GM12878 (cell line): ENCODE measurements at regions of chr9 and their contacts with region 1.

Region 1: GRCh38 chr9:134163353-134164196 is 789 bp downstream of the RNU6ATAC start:
- DNase-seq: no peak
- ATAC-seq: no peak
- H3K4me3 ChIP-seq: peak overlapping the region; percentile 58; the same call in 1 of the 2 replicates
- H3K27ac ChIP-seq: peak overlapping the region; percentile 61
- H3K4me1 ChIP-seq: peaks cover 13% of the 10 kb centered on the region
- H3K27me3 ChIP-seq: no peaks in the 10 kb centered on the region
- CTCF ChIP-seq: peak in 2 of 3 experiments; percentile 32 to 33; a peak in 3 of 6 replicates
- EP300 ChIP-seq: no peak
- POLR2A ChIP-seq: peak; percentile 68
- RAD21 ChIP-seq: no peak

Region 2: DNA sequence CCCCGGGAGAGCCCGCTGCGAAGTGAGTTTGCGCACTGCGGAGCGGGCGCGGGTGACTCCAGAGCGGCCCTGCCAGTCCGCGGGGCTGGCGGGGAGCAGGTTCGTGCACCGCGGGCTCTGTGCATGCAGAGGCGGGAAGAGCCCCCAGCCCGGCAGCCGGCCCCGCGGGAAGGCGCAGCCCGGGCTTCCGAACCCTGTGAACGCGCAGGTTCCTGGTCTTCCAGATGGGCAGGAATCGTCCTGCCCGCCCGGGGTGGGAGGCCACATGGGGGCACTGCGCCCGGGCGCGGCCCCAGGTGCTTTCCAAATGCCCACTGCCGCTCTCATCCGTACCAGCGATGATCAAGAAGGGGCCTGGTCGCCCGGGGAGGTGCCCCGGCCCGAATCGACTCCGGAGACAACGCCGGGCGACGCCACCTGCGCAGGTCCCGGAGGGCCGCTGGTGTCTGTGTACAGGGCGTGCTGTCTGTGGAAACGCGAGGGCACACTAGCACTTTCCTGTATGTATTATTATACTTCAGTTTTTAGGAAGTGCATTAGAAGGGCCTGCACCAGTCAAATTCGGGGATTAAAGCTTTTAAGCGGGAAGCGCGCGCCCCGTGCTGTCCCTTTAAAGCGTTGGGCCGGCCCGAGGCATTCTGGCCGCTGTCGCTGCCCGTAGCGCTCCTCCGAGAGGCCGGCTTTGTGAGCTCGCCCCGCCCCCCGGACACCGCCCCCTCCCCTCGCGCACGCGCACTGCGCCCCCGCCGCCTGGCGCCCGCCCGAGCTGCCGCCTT is 28.0 kb before region 1 on chr9 and contains the start of gene WDR5:
- CTCF ChIA-PET with region 1: interaction called, 5 read pairs
- POLR2A ChIA-PET with region 1: interaction called, 5 read pairs
- RAD21 ChIA-PET with region 1: interaction called, 3 read pairs
- SMC1A ChIA-PET with region 1: interaction called, 5 read pairs
- in situ Hi-C with region 1: no loop called
- intact Hi-C with region 1: loop called (anchors 2 kb)
- DNase-seq: peak; percentile 31
- ATAC-seq: peak; percentile 85
- H3K4me3 ChIP-seq: peak within 1 kb of the TSS; percentile 88
- H3K27ac ChIP-seq: peak within 1 kb of the TSS; percentile 87
- H3K4me1 ChIP-seq: peaks cover 7% of the 10 kb centered on the region
- H3K27me3 ChIP-seq: no peaks in the 10 kb centered on the region
- CTCF ChIP-seq: peak; percentile 7 to 30 (median 28); a peak in 3 of 6 replicates
- EP300 ChIP-seq: no peak
- POLR2A ChIP-seq: peak; percentile 70
- RAD21 ChIP-seq: no peak
- polyA plus RNA-seq, gene WDR5: 1.4 to 3.8 TPM

Region 3: GRCh38 chr9:134289241-134289875 is 125.8 kb after region 1 on chr9:
- CTCF ChIA-PET with region 1: no interaction called
- POLR2A ChIA-PET with region 1: no interaction called
- RAD21 ChIA-PET with region 1: no interaction called
- SMC1A ChIA-PET with region 1: no interaction called
- in situ Hi-C with region 1: no loop called
- intact Hi-C with region 1: no loop called
- DNase-seq: no peak
- ATAC-seq: no peak
- H3K4me3 ChIP-seq: no peak overlapping the region
- H3K27ac ChIP-seq: no peak overlapping the region
- H3K4me1 ChIP-seq: no peaks in the 10 kb centered on the region
- H3K27me3 ChIP-seq: no peaks in the 10 kb centered on the region; a peak in 1 of 4 replicates
- CTCF ChIP-seq: no peak
- EP300 ChIP-seq: no peak
- POLR2A ChIP-seq: no peak
- RAD21 ChIP-seq: no peak

Region 4: DNA sequence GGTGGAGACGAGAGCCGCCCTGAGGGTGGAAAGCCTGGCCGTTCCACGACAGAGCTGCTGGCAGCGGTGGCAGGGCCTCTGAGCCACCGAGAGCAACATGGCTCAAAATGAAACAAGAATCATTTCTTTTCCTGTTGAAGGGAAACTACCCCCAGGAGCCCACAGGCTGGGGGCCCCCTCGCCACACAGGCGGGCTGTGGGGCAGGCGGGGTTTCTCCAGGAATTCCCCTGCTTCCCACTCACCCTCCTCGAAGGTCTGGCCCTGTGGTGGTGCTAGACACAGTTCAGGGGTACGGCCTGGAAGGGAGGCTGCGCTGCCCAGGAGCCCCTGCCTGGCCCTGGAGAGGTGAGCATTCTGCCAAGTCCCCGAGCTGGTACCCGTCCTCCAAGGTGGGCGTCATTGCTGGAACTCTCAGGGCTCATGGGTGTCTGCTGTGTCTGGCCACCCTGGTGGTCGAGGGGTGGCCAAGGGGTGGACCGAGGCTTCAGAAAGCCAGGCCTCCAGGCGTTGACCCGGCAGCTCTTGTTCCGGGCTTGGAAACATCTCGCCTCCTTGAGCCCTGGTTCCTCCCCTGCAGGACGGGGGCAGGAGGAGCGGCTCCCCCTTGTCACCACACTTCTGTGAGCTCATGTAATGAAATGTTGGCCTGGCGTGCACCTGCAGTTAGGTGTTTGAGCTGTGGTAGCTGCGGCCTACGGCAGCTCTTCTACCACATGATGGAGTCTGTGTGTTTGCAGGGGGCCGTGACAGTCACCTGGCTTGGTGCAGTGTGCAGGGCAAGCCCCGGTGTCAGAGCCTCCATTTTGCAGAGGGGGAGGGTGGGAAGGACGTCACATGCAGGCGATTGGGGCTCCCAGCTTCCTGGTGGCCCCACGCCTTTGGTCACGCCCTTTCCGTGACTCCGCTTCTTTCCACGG is 228.0 kb after region 1 on chr9:
- CTCF ChIA-PET with region 1: no interaction called
- POLR2A ChIA-PET with region 1: no interaction called
- RAD21 ChIA-PET with region 1: no interaction called
- SMC1A ChIA-PET with region 1: interaction called, 3 read pairs
- in situ Hi-C with region 1: no loop called
- intact Hi-C with region 1: loop called (anchors 1 kb)
- DNase-seq: peak; percentile 69
- ATAC-seq: peak; percentile 72
- H3K4me3 ChIP-seq: peak overlapping the region; percentile 79
- H3K27ac ChIP-seq: peak overlapping the region; percentile 98
- H3K4me1 ChIP-seq: peaks cover 51% of the 10 kb centered on the region
- H3K27me3 ChIP-seq: no peaks in the 10 kb centered on the region
- CTCF ChIP-seq: peak in 1 of 3 experiments; percentile 9; a peak in 1 of 6 replicates
- EP300 ChIP-seq: peak; percentile 74 to 92
- POLR2A ChIP-seq: no peak
- RAD21 ChIP-seq: 0 out of 2 replicates have a peak, but pooled peaks have one; percentile 10

Region 5: GRCh38 chr9:134449221-134449894 is 285.8 kb after region 1 on chr9:
- CTCF ChIA-PET with region 1: interaction called, 8 read pairs
- POLR2A ChIA-PET with region 1: no interaction called
- RAD21 ChIA-PET with region 1: no interaction called
- SMC1A ChIA-PET with region 1: no interaction called
- in situ Hi-C with region 1: loop called (anchors 5 kb)
- intact Hi-C with region 1: no loop called
- DNase-seq: peak; percentile 34
- ATAC-seq: peak; percentile 100
- H3K4me3 ChIP-seq: no peak overlapping the region
- H3K27ac ChIP-seq: no peak overlapping the region
- H3K4me1 ChIP-seq: no peaks in the 10 kb centered on the region; the same call in 1 of the 2 replicates
- H3K27me3 ChIP-seq: no peaks in the 10 kb centered on the region; a peak in 1 of 4 replicates
- CTCF ChIP-seq: peak; percentile 77 to 94 (median 78)
- EP300 ChIP-seq: no peak
- POLR2A ChIP-seq: no peak
- RAD21 ChIP-seq: peak; percentile 75